ENCODE measurements at regions of chr1 and their contacts with region 1.

Region 1: DNA sequence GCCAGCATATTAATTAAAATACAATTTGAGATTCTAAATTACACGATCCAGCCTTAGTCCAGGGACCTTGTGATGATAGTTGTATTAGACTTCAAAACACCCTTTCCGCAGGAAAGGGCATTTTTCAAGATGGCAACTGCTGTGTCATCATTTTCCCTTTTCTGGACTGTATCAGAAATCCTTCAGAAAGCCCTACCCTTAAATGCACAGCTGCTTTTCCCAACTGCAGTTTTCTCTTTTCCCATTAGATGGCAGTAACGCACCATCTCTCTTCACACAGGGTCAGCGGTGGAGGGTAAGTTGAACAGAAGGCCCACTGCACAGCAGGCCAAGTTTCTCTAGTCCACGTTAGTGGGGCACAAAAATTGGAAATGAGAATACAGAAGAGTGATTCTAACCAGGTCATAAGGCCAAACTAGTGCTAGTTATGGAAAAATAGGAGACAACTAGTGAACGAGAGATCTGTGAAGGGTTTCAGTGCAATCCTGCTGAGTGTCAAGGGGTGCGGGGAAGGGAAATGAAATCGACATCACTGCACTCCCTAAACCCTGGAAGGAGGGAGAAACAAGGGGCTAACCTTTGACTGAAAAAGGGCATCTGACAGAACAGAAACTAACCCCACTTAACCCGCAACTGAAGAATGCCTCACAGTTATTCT is 22.1 kb upstream of the TDRD10 start:
- DNase-seq: peak; percentile 67
- ATAC-seq: peak; percentile 84
- H3K4me3 Mint-ChIP-seq: no peak overlapping the region
- H3K27ac Mint-ChIP-seq: no peak overlapping the region
- H3K4me1 Mint-ChIP-seq: peaks cover 27% of the 10 kb centered on the region
- H3K27me3 Mint-ChIP-seq: no peaks in the 10 kb centered on the region

Region 2: GRCh38 chr1:154272217-154272998 is 207.5 kb before region 1 on chr1 and contains the start of gene HAX1:
- CTCF ChIA-PET with region 1: interaction called, 6 read pairs
- POLR2A ChIA-PET with region 1: no interaction called
- intact Hi-C with region 1: loop called in 1 of 2 experiments (anchors 1 kb)
- DNase-seq: peak; percentile 99
- ATAC-seq: peak; percentile 95
- H3K4me3 Mint-ChIP-seq: peak within 1 kb of the TSS; percentile 99
- H3K27ac Mint-ChIP-seq: peak within 1 kb of the TSS; percentile 99
- H3K4me1 Mint-ChIP-seq: peaks cover 37% of the 10 kb centered on the region
- H3K27me3 Mint-ChIP-seq: no peaks in the 10 kb centered on the region
- total RNA-seq, gene HAX1: 177 to 225 TPM

Region 3: GRCh38 chr1:154419620-154420571 is 60.0 kb before region 1 on chr1:
- CTCF ChIA-PET with region 1: no interaction called
- POLR2A ChIA-PET with region 1: no interaction called
- intact Hi-C with region 1: no loop called
- DNase-seq: peak; percentile 80
- ATAC-seq: peak; percentile 78
- H3K4me3 Mint-ChIP-seq: peak overlapping the region; percentile 61
- H3K27ac Mint-ChIP-seq: peak overlapping the region; percentile 92
- H3K4me1 Mint-ChIP-seq: peaks cover 89% of the 10 kb centered on the region
- H3K27me3 Mint-ChIP-seq: no peaks in the 10 kb centered on the region

Region 4: GRCh38 chr1:154463512-154463990 is 16.3 kb before region 1 on chr1:
- CTCF ChIA-PET with region 1: interaction called, 21 read pairs
- POLR2A ChIA-PET with region 1: no interaction called
- intact Hi-C with region 1: no loop called
- DNase-seq: peak; percentile 86
- ATAC-seq: peak; percentile 87
- H3K4me3 Mint-ChIP-seq: peak overlapping the region; percentile 34
- H3K27ac Mint-ChIP-seq: peak overlapping the region; percentile 76
- H3K4me1 Mint-ChIP-seq: peaks cover 83% of the 10 kb centered on the region
- H3K27me3 Mint-ChIP-seq: no peaks in the 10 kb centered on the region

Region 5: DNA sequence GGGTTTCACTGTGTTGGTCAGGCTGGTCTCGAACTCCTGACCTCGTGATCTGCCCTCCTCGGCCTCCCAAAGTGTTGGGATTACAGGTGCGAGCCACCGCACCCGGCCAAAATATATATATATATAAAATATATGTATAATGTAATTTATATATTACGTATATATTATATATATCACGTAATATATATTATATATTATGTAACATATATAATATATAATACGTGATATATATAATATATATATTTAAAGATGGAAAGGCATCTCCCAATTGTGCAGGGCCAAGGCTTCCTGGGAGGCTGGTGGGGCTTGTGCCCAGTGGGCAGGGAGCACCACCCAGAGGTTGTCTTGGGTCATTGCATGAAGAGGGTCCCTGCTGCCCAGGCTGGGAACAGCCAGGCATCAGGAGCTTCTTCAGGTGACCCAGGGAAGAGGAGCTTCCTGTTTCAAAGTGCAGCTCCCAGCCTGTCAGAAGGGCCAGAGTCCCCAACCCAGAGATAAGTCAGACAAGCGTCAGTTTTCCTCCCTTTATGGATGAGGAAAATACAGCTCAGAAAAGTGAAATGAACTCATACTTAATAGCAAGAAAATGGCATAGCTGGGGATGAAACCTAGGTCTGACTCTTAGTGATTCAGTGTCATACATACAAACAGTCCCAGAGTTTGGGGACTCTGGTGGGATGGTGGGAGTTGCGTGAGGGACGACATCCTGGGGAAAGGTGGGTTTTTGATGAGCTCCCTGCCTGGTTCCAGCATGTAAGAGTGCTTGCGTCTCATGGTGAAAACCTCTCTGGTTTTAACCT is 66.6 kb after region 1 on chr1:
- CTCF ChIA-PET with region 1: interaction called, 115 read pairs
- POLR2A ChIA-PET with region 1: no interaction called
- intact Hi-C with region 1: loop called (anchors 1 kb)
- DNase-seq: peak; percentile 79
- ATAC-seq: peak; percentile 94
- H3K4me3 Mint-ChIP-seq: no peak overlapping the region
- H3K27ac Mint-ChIP-seq: no peak overlapping the region
- H3K4me1 Mint-ChIP-seq: peaks cover 9% of the 10 kb centered on the region
- H3K27me3 Mint-ChIP-seq: peaks cover 2% of the 10 kb centered on the region

Region 6: DNA sequence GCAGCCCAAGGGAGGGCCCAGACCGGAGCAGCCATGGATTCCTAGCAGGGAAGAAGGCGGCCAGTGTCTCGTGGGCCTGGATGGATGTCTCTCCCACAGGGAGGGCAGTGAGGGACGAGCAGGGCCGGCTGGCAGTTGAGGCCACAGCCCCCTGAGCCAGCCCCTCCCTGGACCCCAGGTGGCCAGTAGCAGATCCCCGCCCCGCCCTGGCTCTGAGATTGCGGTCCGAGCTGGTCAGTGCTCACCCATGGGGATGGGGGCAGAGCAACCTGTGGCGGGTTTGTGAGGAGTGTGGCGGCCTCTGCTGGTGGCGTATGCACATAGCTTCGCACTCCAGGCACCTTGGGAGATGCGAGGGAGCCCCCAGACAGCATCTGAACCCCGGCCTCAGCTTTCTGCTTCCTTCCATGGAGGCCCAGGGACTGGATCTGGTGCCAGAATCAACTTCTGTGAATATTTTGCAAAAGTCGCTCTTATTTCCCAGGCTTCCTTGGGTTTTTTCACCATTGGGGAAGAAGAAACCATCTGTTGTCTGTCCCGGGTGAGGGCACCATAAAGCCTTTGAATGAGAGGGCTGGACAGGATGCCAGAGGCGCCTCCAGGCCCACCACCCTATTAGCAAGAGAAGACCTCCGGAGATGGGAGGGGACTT is 398.6 kb after region 1 on chr1:
- CTCF ChIA-PET with region 1: interaction called, 3 read pairs
- POLR2A ChIA-PET with region 1: no interaction called
- intact Hi-C with region 1: loop called in 1 of 2 experiments (anchors 5 kb)
- DNase-seq: peak; percentile 87
- ATAC-seq: peak; percentile 95
- H3K4me3 Mint-ChIP-seq: no peak overlapping the region
- H3K27ac Mint-ChIP-seq: no peak overlapping the region
- H3K4me1 Mint-ChIP-seq: peaks cover 10% of the 10 kb centered on the region
- H3K27me3 Mint-ChIP-seq: peaks cover 4% of the 10 kb centered on the region

Measured in activated CD4-positive, alpha-beta T cell treated with anti-CD3 and anti-CD28 coated beads for 36 hours (primary cell).